A673 (cell line): ENCODE measurements at regions of chr1 and their contacts with region 1.

Region 1: DNA sequence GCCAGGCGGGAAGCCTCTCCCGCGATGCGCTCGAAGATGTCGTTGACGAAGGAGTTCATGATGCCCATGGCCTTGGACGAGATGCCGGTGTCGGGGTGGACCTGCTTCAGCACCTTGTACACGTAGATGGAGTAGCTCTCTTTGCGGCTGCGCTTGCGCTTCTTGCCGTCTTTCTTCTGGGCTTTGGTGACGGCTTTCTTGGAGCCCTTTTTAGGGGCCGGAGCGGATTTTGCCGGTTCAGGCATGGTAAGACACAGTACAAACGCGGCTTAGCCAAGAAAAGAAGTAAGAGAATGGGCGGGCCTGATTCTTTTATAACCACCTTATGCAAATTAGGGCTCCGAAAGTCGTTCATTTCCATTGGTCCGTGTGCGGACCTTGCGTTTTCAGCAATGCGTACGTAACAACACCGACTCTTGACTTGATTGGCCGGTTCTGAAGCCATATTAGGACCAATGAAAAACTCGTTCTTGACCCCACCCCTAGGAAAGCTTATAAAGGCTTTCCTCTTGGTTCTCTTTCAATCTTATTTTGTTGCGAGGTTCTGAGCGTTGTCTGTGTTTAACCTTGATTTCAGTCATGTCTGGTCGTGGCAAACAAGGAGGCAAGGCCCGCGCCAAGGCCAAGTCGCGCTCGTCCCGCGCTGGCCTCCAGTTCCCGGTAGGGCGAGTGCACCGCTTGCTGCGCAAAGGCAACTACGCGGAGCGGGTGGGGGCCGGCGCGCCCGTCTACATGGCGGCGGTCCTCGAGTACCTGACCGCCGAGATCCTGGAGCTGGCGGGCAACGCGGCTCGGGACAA is 12.8 kb upstream of the BOLA1 start:
- DNase-seq: peak; percentile 99
- H3K4me3 ChIP-seq: peak overlapping the region; percentile 68
- H3K27ac ChIP-seq: peak overlapping the region; percentile 98
- H3K4me1 ChIP-seq: no peaks in the 10 kb centered on the region
- H3K27me3 ChIP-seq: no peaks in the 10 kb centered on the region
- CTCF ChIP-seq: no peak

Region 2: DNA sequence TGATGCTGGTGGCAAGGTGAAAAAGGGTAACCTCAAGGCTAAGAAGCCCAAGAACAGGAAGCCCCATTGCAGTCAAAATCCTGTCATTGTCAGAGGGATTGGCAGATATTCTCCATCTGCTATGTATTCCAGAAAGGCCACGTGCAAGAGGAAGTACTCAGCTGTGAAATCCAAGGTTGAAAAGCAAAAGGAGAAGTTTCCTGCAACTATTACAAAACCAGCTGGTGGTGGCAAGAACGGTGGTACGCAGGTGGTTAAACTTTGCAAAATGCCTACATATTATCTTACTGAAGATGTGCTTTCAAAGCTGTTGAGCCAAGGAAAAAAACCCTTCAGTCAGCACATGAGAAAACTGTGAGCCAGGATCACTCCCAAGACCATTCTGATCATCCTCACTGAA is 167.3 kb after region 1 on chr1:
- CTCF ChIA-PET with region 1: interaction called, 11 read pairs
- POLR2A ChIA-PET with region 1: no interaction called
- intact Hi-C with region 1: no loop called
- DNase-seq: no peak
- H3K4me3 ChIP-seq: no peak overlapping the region
- H3K27ac ChIP-seq: no peak overlapping the region
- H3K4me1 ChIP-seq: no peaks in the 10 kb centered on the region
- H3K27me3 ChIP-seq: no peaks in the 10 kb centered on the region
- CTCF ChIP-seq: no peak

Region 3: DNA sequence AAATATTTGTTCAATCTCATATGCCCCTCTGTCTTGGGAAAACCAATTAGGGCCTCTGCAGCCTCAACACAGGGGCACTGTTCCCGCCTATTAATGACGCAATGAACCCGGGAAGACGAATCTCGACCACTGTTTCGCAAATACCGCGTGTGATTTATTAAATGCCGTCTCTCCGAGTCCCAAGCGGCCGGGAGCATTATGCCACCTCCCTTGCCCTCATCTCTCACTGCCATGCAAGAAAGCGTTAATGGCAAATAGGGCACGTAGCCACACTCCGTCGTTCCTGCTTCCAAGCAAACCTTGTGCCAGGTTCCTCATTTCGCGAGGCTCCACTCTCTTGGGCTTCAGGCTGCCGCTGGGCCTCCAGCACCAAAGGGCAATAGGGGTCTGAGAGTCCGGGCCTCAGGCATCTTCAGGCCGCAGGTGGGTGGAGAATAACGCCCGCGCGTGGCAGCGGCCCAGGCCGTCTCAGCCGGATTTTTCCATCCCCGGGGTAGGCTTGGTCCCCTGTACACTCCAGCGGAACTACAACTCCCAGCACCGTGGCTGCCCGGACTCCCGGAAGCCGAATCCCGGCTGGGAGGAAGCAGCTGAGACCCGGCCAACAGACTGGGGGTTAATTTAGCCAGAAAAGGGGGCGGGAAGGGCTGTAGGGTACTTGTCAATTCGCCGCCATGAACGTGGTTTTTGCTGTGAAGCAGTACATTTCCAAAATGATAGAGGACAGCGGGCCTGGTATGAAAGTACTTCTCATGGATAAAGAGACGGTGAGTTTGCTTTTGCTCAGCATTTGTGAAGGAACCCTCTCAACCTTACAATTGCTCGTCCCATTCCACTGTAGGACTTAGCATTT is 180.8 kb after region 1 on chr1 and contains the start of gene VPS45:
- CTCF ChIA-PET with region 1: no interaction called
- POLR2A ChIA-PET with region 1: no interaction called
- intact Hi-C with region 1: loop called (anchors 2 kb)
- DNase-seq: peak; percentile 98
- H3K4me3 ChIP-seq: peak within 1 kb of the TSS; percentile 67
- H3K27ac ChIP-seq: peak within 1 kb of the TSS; percentile 97
- H3K4me1 ChIP-seq: peaks cover 23% of the 10 kb centered on the region
- H3K27me3 ChIP-seq: no peaks in the 10 kb centered on the region
- CTCF ChIP-seq: no peak
- total RNA-seq, gene VPS45: 50.3 and 51.3 TPM in 2 replicates

Region 4: DNA sequence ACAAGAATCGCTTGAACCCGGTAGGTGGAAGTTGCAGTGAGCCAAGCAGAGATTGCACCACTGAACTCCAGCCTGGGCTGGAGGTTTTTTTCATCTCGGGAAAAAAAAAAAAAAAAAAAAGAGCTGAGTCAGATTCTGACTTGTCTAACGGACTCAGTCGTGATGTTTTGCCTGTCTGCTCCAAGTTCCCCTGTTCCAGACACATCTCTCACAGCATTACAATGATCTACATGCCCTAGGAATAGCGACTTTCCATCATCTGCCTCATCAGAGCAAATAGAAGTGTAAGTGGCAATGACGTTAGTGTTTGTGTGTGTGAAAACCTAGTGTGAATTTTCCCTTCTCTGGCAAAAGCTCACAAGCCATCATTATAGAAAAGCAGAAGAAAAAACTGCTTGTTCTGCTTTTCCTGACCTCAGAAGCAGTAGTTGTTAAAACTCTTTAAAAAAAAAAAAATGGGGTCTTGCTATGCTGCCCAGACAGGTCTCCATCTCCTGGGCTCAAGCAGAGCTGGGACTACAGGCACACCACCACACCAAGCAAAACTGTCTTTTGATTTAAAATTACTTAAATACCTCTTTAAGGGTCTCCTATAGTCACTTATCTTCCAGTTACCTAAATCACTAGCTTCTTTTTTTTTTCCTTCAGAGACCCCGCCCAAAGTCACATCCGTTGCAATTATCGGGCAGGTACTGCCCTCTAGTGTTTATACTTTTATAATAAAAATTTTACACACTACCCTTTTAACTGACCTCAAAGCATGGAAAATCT is 300.4 kb after region 1 on chr1:
- CTCF ChIA-PET with region 1: interaction called, 10 read pairs
- POLR2A ChIA-PET with region 1: interaction called, 4 read pairs
- intact Hi-C with region 1: no loop called
- DNase-seq: peak; percentile 79
- H3K4me3 ChIP-seq: no peak overlapping the region
- H3K27ac ChIP-seq: no peak overlapping the region
- H3K4me1 ChIP-seq: peaks cover 12% of the 10 kb centered on the region
- H3K27me3 ChIP-seq: no peaks in the 10 kb centered on the region
- CTCF ChIP-seq: peak; percentile 71

Region 5: DNA sequence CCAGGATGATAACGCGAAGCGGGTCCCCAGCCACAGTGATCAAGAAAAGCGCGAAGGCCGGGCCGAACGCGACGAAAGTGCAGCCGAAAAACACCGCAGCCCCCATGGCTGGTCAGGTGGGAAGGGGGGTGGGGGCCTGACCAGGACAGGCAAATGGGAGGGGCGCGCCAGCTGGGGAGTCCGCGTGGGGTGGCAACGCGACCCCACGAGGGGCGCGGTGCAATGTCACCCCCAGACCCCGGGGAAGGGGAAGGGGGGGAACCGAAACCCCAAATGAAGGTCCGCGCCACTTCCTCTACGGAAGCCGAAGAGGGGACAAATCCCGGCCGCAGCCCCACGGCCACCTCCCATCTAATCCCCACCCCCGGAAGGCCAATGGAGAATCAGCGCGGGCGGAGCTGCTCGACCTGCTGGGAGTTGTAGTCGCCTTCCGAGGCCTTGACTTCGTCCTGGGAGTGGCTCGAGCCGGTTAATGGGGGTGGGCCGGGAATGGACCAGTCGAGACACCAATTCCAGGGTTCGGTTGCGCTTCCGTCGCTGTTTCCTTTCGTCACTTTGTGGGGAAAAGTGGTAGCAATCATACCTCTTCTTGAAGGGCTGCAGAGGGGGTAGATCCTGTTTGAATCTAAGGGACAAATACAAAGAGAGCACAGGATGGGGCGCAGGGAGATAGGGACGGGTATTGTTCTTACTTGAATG is 382.3 kb after region 1 on chr1 and contains the start of gene APH1A:
- CTCF ChIA-PET with region 1: no interaction called
- POLR2A ChIA-PET with region 1: interaction called, 10 read pairs
- intact Hi-C with region 1: no loop called
- DNase-seq: peak; percentile 99
- H3K4me3 ChIP-seq: peak within 1 kb of the TSS; percentile 96
- H3K27ac ChIP-seq: peak within 1 kb of the TSS; percentile 91
- H3K4me1 ChIP-seq: peaks cover 26% of the 10 kb centered on the region
- H3K27me3 ChIP-seq: no peaks in the 10 kb centered on the region
- CTCF ChIP-seq: no peak
- total RNA-seq, gene APH1A: 136 and 144 TPM in 2 replicates

Region 6: DNA sequence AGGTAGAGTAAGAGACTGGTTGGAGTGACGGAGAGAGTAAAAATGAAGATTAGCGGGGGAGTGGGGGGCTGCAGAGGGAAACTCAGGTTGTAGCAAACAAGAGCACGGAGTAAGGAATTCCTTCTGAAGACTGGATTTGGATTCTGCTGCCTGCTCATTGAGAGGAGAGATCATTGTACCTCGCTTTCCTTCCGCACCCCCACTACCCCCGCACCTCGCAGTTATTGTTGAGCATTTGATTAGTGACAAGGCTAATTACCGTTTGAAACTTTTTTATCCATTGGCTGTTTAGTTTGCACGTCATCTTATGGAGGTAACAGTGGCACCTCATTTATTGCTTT is 435.2 kb after region 1 on chr1:
- CTCF ChIA-PET with region 1: no interaction called
- POLR2A ChIA-PET with region 1: interaction called, 17 read pairs
- intact Hi-C with region 1: no loop called
- DNase-seq: no peak
- H3K4me3 ChIP-seq: peak overlapping the region; percentile 81
- H3K27ac ChIP-seq: peak overlapping the region; percentile 84
- H3K4me1 ChIP-seq: peaks cover 7% of the 10 kb centered on the region
- H3K27me3 ChIP-seq: no peaks in the 10 kb centered on the region
- CTCF ChIP-seq: no peak

Region 7: DNA sequence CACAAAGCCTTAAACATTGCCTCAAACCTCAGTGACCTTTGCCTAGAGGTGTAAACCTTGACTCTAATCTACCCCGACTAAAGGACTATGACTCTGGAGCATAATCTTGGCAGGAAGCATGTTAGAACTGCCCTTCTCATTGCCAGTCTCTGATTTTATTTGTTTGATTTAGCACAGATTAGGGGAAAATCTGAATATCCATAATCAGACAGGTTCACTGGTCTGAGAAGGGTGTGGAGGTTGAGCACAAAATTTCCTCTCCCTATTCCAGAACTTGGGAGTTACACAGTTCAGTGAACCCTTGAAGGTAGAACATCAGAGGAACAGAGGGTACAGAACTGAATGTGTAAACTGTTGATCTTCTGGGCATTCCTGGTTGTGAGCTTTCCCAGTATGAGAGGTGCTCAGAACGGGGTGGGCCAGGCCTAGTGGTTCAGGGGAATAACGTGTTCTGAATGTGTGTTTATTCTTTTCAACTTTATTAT is 1504.5 kb after region 1 on chr1:
- CTCF ChIA-PET with region 1: no interaction called
- POLR2A ChIA-PET with region 1: no interaction called
- intact Hi-C with region 1: no loop called
- DNase-seq: no peak
- H3K4me3 ChIP-seq: no peak overlapping the region
- H3K27ac ChIP-seq: no peak overlapping the region
- H3K4me1 ChIP-seq: no peaks in the 10 kb centered on the region
- H3K27me3 ChIP-seq: no peaks in the 10 kb centered on the region
- CTCF ChIP-seq: no peak